Naive thymus-derived CD4-positive, alpha-beta T cell (primary cell): ENCODE measurements at regions of chr3 and their contacts with region 1.

Region 1: GRCh38 chr3:58305882-58306711 is at the starts of genes HTD2 and RPP14:
- DNase-seq: peak; percentile 96 to 99 (median 98)
- ATAC-seq: peak; percentile 95
- H3K4me3 ChIP-seq: peak within 1 kb of the TSS; percentile 90
- H3K4me3 Mint-ChIP-seq: peak within 1 kb of the TSS; percentile 94 to 99 (median 97)
- H3K27ac ChIP-seq: peak within 1 kb of the TSS; percentile 98
- H3K27ac Mint-ChIP-seq: peak within 1 kb of the TSS; percentile 99 to 100 (median 99)
- H3K4me1 ChIP-seq: peaks cover 21 to 24% of the 10 kb centered on the region in 2 donors
- H3K4me1 Mint-ChIP-seq: peaks cover 28 to 47% (median 36%) of the 10 kb centered on the region in 7 donors
- H3K27me3 ChIP-seq: no peaks in the 10 kb centered on the region
- H3K27me3 Mint-ChIP-seq: peaks cover 5 to 13% (median 8%) of the 10 kb centered on the region in 5 donors
- total RNA-seq, gene HTD2: 4.5 to 10.6 (median 9.2) TPM
- total RNA-seq, gene RPP14: 14.8 to 21.6 (median 17.6) TPM

Region 2: DNA sequence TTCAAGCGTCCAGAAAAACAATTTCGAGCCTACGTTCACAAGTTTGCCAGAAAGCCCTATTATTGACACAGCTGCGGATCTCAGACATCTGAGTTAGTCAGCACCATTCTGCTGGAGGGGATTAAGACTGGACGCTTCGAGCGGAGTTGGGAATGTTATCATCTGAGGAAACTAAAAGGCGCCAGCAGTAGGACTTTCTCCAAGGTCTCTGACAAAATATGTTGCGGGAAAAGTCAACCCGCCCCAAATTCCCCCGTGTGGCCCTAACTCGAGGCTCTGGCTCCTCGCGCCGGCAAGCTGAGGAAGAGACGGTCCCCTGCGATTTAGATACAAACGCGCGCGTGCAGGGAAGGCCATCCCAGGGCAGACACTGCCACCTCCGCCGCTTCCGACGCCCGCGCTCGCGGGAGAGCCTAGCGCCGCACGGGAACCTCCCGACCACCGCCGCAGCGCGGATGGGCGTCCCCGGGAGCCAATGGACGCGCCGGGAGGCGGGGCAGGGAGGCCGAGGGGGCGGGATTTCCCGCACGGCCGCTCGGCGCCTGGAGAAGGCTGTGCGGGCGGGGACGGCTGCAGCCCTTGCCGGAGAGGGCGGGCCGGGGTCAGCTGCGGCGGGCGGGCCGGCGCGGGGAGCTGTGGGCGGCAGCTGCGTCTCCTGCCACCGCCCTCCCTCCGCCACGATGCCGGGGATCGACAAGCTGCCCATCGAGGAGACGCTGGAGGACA is 1078.7 kb before region 1 on chr3 and contains the start of gene APPL1:
- CTCF ChIA-PET with region 1: no interaction called
- POLR2A ChIA-PET with region 1: no interaction called
- intact Hi-C with region 1: loop called in 1 of 2 experiments (anchors 2 kb)
- DNase-seq: peak; percentile 76 to 97 (median 82)
- ATAC-seq: peak; percentile 96
- H3K4me3 ChIP-seq: peak within 1 kb of the TSS; percentile 88
- H3K4me3 Mint-ChIP-seq: peak within 1 kb of the TSS; percentile 89 to 95 (median 93)
- H3K27ac ChIP-seq: peak within 1 kb of the TSS; percentile 71
- H3K27ac Mint-ChIP-seq: peak within 1 kb of the TSS; percentile 72 to 90 (median 86)
- H3K4me1 ChIP-seq: peaks cover 9 to 12% of the 10 kb centered on the region in 2 donors
- H3K4me1 Mint-ChIP-seq: peaks cover 17 to 38% (median 29%) of the 10 kb centered on the region in 7 donors
- H3K27me3 ChIP-seq: no peaks in the 10 kb centered on the region
- H3K27me3 Mint-ChIP-seq: peaks cover 0 to 5% (median 0%) of the 10 kb centered on the region in 5 donors
- total RNA-seq, gene APPL1: 25.4 to 42.1 (median 29.2) TPM

Region 3: GRCh38 chr3:57755668-57756527 is 550.2 kb before region 1 on chr3 and contains the start of gene SLMAP:
- CTCF ChIA-PET with region 1: no interaction called
- POLR2A ChIA-PET with region 1: interaction called, 4 read pairs
- intact Hi-C with region 1: loop called (anchors 1 to 2 kb)
- DNase-seq: peak; percentile 84 to 97 (median 95)
- ATAC-seq: peak; percentile 98
- H3K4me3 ChIP-seq: peak within 1 kb of the TSS; percentile 80
- H3K4me3 Mint-ChIP-seq: peak within 1 kb of the TSS; percentile 92 to 98 (median 97)
- H3K27ac ChIP-seq: peak within 1 kb of the TSS; percentile 84
- H3K27ac Mint-ChIP-seq: peak within 1 kb of the TSS; percentile 88 to 96 (median 92)
- H3K4me1 ChIP-seq: peaks cover 23 to 29% of the 10 kb centered on the region in 2 donors
- H3K4me1 Mint-ChIP-seq: peaks cover 17 to 45% (median 41%) of the 10 kb centered on the region in 7 donors
- H3K27me3 ChIP-seq: no peaks in the 10 kb centered on the region
- H3K27me3 Mint-ChIP-seq: peaks cover 0 to 8% (median 0%) of the 10 kb centered on the region in 5 donors
- total RNA-seq, gene SLMAP: 54.6 to 77.1 (median 66.6) TPM

Region 4: DNA sequence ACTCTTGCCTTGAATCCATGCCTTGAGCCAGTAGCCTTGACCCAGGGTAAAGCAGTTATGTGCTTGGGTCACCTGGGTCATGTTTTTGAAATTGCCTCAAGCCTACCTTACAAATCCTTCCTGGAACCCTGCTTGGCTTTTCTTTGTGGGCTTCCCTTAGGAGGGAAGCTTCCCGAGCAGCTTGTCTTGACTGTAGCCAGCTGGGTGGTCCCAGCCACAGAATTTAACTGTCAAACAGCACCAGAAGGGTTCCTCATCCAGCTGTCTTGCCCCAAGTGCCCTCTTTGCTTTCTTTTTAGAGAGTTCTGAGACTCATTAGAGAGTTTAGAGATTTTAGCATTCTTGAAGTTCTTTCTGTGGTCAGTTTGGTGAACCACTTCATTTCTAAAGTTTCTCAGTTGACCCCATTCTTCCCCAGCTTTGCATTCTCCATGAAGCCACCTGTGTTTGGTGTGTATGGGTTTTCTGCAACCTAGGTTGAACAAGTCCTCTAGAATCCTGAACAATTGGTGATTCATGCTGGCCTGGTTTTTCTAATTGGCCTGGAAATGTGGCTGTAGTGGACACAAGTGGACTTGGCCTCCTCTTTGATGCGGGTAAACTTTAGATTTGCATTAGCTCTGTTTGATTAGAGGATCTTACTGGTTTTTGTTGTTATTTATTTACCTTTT is 264.3 kb before region 1 on chr3:
- CTCF ChIA-PET with region 1: no interaction called
- POLR2A ChIA-PET with region 1: no interaction called
- intact Hi-C with region 1: no loop called
- DNase-seq: no peak
- ATAC-seq: no peak
- H3K4me3 ChIP-seq: no peak overlapping the region
- H3K4me3 Mint-ChIP-seq: peak overlapping the region in 5 of 10 donors; percentile 2 to 55 (median 11)
- H3K27ac ChIP-seq: no peak overlapping the region
- H3K27ac Mint-ChIP-seq: peak overlapping the region in 8 of 9 donors; percentile 4 to 82 (median 43)
- H3K4me1 ChIP-seq: peaks cover 0 to 3% of the 10 kb centered on the region in 2 donors
- H3K4me1 Mint-ChIP-seq: peaks cover 29 to 87% (median 49%) of the 10 kb centered on the region in 7 donors
- H3K27me3 ChIP-seq: no peaks in the 10 kb centered on the region
- H3K27me3 Mint-ChIP-seq: peaks cover 0 to 2% (median 0%) of the 10 kb centered on the region in 5 donors

Region 5: DNA sequence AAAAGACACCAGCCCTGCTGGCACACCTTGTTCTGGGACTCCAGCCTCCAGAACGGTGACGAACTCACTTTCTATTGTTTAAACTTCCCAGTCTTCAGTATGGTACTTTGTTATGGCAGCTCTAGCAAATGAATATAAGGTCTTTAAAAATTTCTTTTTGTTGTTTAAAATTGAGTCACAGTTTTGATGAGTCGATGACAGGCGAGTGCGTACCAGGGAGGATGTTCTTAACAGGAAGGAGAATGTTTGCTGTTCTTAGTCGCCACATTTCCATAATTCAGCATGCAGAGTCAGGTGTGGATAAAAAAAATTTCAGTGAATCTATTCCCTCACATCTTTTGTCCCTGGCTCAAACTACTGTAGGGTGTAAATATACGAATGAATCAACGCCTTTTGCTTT is 107.7 kb before region 1 on chr3:
- CTCF ChIA-PET with region 1: no interaction called
- POLR2A ChIA-PET with region 1: no interaction called
- intact Hi-C with region 1: no loop called
- DNase-seq: no peak
- ATAC-seq: no peak
- H3K4me3 ChIP-seq: no peak overlapping the region
- H3K4me3 Mint-ChIP-seq: no peak overlapping the region
- H3K27ac ChIP-seq: no peak overlapping the region
- H3K27ac Mint-ChIP-seq: no peak overlapping the region
- H3K4me1 ChIP-seq: no peaks in the 10 kb centered on the region
- H3K4me1 Mint-ChIP-seq: peaks cover 0 to 10% (median 5%) of the 10 kb centered on the region in 7 donors
- H3K27me3 ChIP-seq: no peaks in the 10 kb centered on the region
- H3K27me3 Mint-ChIP-seq: peaks cover 6 to 18% (median 6%) of the 10 kb centered on the region in 5 donors

Region 6: DNA sequence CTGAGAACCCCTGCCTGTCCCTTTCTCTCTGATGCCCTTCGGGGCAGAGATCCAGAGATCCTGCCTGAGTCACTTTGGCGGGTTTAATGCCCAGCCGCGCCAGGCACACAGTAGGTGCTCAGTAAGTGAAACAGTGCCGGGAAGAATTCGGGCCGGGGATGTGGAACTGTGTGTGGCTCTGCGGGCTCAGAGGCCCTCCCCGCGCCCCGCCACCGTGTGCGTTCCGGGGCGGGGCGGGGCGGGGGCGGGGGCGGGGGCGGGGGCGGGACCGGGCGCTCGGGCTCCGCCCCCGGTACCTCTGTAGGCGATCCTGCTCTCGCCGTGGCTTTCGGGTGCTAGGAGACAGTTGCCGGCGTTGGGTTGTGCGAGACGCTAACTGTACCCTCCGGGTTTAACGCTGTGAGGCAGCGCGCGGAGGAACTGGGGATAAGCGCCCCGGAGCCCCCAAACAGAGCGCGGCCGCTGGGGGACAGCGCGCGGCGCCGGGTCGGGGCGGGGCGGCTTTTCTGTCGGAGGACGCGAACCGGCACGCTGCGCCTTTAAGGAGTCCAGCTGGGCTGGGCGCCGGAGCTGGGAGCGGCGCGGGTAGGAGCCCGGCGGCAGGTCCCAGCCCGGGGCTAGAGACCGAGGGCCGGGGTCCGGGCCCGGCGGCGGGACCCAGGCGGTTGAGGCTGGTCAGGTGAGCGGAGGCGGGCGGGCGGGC is 68.7 kb before region 1 on chr3 and contains the start of gene ABHD6:
- CTCF ChIA-PET with region 1: interaction called, 16 read pairs
- POLR2A ChIA-PET with region 1: interaction called, 6 read pairs
- intact Hi-C with region 1: loop called (anchors 1 kb)
- DNase-seq: peak; percentile 58 to 95 (median 86)
- ATAC-seq: peak; percentile 91
- H3K4me3 ChIP-seq: peak within 1 kb of the TSS; percentile 86
- H3K4me3 Mint-ChIP-seq: peak within 1 kb of the TSS; percentile 84 to 98 (median 92)
- H3K27ac ChIP-seq: peak within 1 kb of the TSS; percentile 72
- H3K27ac Mint-ChIP-seq: peak within 1 kb of the TSS; percentile 50 to 87 (median 81)
- H3K4me1 ChIP-seq: peaks cover 6 to 12% of the 10 kb centered on the region in 2 donors
- H3K4me1 Mint-ChIP-seq: peaks cover 9 to 18% (median 13%) of the 10 kb centered on the region in 7 donors
- H3K27me3 ChIP-seq: no peaks in the 10 kb centered on the region
- H3K27me3 Mint-ChIP-seq: peaks cover 0 to 29% (median 13%) of the 10 kb centered on the region in 5 donors
- total RNA-seq, gene ABHD6: 3.1 to 7.3 (median 6.6) TPM

Region 7: DNA sequence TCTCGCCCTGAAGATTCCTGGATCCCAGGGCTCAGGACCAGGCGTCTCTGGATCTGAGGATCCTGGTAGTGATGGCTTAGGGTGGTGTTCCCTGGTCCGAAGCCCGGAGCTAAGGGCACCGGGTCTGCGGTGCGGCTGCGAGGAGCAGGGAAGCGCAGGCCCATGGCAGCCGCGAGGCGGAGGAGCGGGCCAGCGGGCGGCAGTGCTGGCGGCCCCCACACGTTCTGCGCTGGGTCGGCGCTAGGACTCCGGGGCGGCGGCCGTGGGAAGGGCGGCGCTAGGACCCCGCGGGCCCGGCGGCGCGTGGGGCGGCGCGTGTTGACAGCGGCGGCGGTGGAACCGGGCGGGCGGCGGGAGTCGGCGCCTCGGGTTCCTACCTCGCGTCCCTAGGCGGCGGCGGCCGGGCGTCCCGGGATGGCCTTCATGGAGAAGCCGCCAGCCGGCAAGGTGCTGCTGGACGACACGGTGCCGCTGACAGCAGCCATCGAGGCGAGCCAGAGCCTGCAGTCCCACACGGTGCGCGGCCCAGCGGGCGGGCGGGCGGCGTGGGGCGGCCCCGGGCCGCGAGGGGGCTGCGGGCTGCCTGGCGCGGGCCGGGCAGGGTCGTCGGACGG is 26.6 kb after region 1 on chr3 and contains the start of gene PXK:
- CTCF ChIA-PET with region 1: interaction called, 12 read pairs
- POLR2A ChIA-PET with region 1: interaction called, 29 read pairs
- intact Hi-C with region 1: loop called (anchors 1 kb)
- DNase-seq: peak; percentile 63 to 89 (median 79)
- ATAC-seq: peak; percentile 94
- H3K4me3 ChIP-seq: peak within 1 kb of the TSS; percentile 68
- H3K4me3 Mint-ChIP-seq: peak within 1 kb of the TSS; percentile 83 to 100 (median 99)
- H3K27ac ChIP-seq: peak within 1 kb of the TSS; percentile 70
- H3K27ac Mint-ChIP-seq: peak within 1 kb of the TSS; percentile 65 to 97 (median 88)
- H3K4me1 ChIP-seq: peaks cover 20 to 22% of the 10 kb centered on the region in 2 donors
- H3K4me1 Mint-ChIP-seq: peaks cover 30 to 47% (median 38%) of the 10 kb centered on the region in 7 donors
- H3K27me3 ChIP-seq: no peaks in the 10 kb centered on the region
- H3K27me3 Mint-ChIP-seq: no peaks in the 10 kb centered on the region
- total RNA-seq, gene PXK: 17.3 to 38.9 (median 22.3) TPM

Region 8: GRCh38 chr3:58491506-58492402 is 185.7 kb after region 1 on chr3 and contains the start of gene KCTD6:
- CTCF ChIA-PET with region 1: interaction called, 12 read pairs
- POLR2A ChIA-PET with region 1: interaction called, 26 read pairs
- intact Hi-C with region 1: loop called (anchors 1 kb)
- DNase-seq: peak; percentile 72 to 95 (median 84)
- ATAC-seq: peak; percentile 93
- H3K4me3 ChIP-seq: peak within 1 kb of the TSS; percentile 95
- H3K4me3 Mint-ChIP-seq: peak within 1 kb of the TSS; percentile 92 to 99 (median 94)
- H3K27ac ChIP-seq: peak within 1 kb of the TSS; percentile 69
- H3K27ac Mint-ChIP-seq: peak within 1 kb of the TSS; percentile 83 to 97 (median 90)
- H3K4me1 ChIP-seq: peaks cover 22 to 25% of the 10 kb centered on the region in 2 donors
- H3K4me1 Mint-ChIP-seq: peaks cover 37 to 64% (median 59%) of the 10 kb centered on the region in 7 donors
- H3K27me3 ChIP-seq: no peaks in the 10 kb centered on the region
- H3K27me3 Mint-ChIP-seq: peaks cover 0 to 45% (median 0%) of the 10 kb centered on the region in 5 donors
- total RNA-seq, gene KCTD6: 4.8 to 14.2 (median 10.9) TPM

Region 9: DNA sequence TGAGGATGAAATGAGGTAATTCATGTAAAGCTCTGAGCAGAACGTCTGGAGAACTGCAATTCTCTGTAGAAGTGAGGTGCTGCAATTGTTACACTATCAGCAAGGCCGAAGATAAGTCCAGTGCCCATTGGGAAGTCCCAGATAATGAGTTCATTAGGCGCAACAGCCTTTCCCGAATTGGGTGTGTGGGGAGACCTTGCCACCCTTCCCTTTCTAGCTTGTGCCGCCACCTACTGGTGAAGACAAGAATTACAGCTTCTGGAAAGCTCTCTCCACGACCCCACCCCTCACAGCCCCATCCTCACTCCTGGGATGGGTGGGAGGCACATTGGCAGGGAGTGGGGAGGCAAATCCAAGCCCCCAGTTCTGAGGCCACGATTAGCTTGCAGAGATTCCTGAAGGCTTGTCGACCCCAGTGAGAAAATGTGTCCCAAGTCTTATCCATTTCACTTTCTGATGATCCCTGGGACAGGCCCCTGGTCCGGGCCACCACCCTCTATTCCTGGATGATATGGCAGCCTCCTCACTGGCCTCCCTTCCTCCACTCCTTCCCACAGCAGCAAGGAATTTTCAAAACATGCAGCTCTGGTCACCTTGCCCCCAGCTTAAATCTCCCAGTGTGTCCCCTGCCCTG is 324.1 kb after region 1 on chr3:
- CTCF ChIA-PET with region 1: interaction called, 6 read pairs
- POLR2A ChIA-PET with region 1: no interaction called
- intact Hi-C with region 1: loop called in 1 of 2 experiments (anchors 1 kb)
- DNase-seq: peak; percentile 14 to 62 (median 33)
- ATAC-seq: peak; percentile 69
- H3K4me3 ChIP-seq: no peak overlapping the region
- H3K4me3 Mint-ChIP-seq: no peak overlapping the region
- H3K27ac ChIP-seq: no peak overlapping the region
- H3K27ac Mint-ChIP-seq: peak overlapping the region in 1 of 9 donors; percentile 42
- H3K4me1 ChIP-seq: no peaks in the 10 kb centered on the region
- H3K4me1 Mint-ChIP-seq: peaks cover 0 to 2% (median 0%) of the 10 kb centered on the region in 7 donors
- H3K27me3 ChIP-seq: no peaks in the 10 kb centered on the region
- H3K27me3 Mint-ChIP-seq: peaks cover 0 to 25% (median 11%) of the 10 kb centered on the region in 5 donors